RWPE1 (cell line): ENCODE measurements at regions of chr11 and their contacts with region 1.

Region 1: DNA sequence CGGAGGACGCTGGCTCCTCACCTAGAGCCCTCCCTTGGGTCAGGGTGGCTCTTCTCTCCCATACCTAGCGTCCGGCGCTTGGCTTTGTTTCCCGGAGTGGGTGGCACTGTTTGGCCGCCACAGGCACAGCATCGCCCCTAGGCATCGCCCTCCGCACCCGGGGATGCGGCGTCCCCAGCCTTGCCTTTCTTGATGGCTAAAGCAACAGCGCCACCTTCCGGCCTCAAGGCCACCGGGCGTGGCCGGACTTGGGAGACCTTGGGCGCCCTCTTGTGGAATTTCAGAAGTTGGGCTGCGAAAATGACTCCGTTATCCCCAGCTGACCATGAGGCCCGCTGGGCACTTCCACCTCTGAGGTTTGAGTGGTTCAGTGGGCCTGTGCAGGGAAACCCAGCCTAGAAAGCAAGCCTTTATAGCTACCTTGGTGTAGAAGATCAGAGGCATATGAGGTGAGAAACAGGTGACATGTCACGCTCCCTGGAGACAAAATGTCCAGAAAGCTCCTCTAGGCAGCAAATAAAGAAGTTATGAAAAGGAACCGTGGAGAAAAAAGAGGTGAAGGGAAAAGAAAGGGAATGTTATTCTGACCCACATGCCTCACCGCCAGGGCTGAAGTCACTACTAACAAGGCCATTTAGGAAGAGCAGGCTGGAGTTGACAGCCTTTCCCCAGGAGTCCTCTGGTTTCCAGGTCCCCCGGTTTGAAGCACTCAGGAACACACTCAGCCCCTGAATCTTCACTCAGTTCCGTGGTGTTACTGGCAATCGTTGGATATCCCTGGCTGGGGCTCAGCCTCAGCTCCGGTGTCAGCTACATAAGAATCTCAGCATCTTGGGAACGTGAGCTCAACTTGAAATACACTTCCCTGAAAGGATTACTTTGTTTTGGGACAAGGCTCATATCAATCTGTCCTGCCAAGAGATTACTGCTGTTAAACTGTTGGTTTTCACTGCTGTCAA is 54.1 kb downstream of the SNX19 start:
- DNase-seq: peak; percentile 76
- H3K27ac ChIP-seq: peak overlapping the region; percentile 1; the same call in 1 of the 2 replicates
- CTCF ChIP-seq: peak; percentile 96

Region 2: GRCh38 chr11:130434521-130435223 is 427.5 kb before region 1 on chr11:
- CTCF ChIA-PET with region 1: interaction called, 74 read pairs
- POLR2A ChIA-PET with region 1: no interaction called
- DNase-seq: peak; percentile 77
- H3K27ac ChIP-seq: peak overlapping the region; percentile 65
- CTCF ChIP-seq: peak; percentile 90

Region 3: GRCh38 chr11:130585545-130585944 is 276.6 kb before region 1 on chr11:
- CTCF ChIA-PET with region 1: no interaction called
- POLR2A ChIA-PET with region 1: no interaction called
- DNase-seq: peak; percentile 35
- H3K27ac ChIP-seq: peak overlapping the region; percentile 85
- CTCF ChIP-seq: no peak

Region 4: GRCh38 chr11:130827451-130828377 is 34.5 kb before region 1 on chr11:
- CTCF ChIA-PET with region 1: interaction called, 10 read pairs
- POLR2A ChIA-PET with region 1: no interaction called
- DNase-seq: peak; percentile 68
- H3K27ac ChIP-seq: peak overlapping the region; percentile 15; the same call in 1 of the 2 replicates
- CTCF ChIP-seq: peak; percentile 36

Region 5: DNA sequence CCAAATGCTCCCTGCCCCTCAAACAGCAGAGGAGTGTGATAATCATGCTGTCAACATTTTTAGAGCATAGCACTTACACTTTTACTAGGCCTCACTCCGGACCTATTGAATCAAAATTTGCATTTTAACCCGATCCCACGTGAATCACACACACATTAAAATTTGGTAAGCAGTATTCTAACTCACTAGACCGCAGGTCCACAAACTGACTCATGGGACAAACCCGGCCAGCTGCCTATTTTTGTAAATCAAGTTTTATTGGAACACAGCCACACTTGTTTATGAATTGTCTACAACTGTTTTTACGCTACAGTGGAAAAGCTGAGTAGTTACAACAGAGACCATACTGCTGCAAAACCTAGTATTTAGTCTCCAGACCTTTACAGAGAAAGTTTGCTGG is 10.8 kb after region 1 on chr11:
- CTCF ChIA-PET with region 1: interaction called, 21 read pairs
- POLR2A ChIA-PET with region 1: no interaction called
- DNase-seq: peak; percentile 36
- H3K27ac ChIP-seq: no peak overlapping the region
- CTCF ChIP-seq: no peak

Region 6: DNA sequence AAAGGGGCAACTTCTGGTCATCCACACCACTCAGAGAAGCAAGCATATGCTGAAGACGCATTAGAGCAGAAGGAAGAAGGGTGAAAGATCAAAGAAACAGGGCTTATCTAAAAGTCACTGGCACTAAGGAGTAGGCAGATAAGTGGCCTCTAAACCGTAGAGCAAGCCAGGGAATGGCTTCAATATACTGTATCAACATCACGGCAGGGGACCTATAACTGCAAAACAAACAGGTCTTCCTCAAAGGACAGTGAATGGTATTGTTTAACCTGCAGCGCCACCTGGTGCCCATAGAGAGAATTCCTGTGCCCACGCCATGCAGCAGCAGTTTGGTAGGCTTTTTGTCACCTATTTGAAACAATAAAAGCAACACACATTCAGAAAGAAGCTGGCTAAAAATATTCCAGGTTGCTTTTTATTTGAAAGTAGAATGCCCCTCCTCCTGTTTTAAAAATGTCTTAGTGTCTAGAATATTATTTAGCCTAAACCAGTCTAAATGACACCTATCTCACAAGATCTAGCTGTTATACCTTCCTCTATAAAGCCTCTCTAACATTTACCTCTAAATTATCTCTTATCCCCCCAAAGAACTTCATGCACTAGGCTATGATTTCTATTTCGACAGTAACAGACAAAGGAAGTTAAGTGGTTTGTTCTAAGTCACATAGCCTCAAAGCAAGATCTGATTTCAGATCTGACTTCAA is 32.3 kb after region 1 on chr11:
- CTCF ChIA-PET with region 1: interaction called, 12 read pairs
- POLR2A ChIA-PET with region 1: no interaction called
- DNase-seq: peak; percentile 35
- H3K27ac ChIP-seq: no peak overlapping the region
- CTCF ChIP-seq: peak; percentile 87

Region 7: DNA sequence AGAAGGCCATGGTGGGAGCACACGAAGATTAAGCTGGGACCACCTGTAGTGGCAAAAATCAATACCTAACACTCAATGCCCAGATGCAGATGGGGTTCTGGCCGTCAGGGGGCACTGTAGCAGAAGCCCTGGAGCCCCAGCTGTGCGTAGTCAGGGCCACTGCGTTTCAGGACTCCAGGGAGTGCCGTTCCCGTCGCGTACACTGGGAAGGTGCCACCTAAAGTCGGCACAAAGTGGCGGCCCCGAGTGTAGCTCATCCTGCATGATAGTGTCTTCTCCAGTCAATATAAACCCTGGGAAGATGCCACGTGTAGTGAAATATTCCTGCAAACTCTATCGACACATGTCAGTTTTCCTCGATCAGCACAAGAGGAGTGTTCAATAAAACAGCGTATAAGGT is 384.5 kb after region 1 on chr11:
- CTCF ChIA-PET with region 1: no interaction called
- POLR2A ChIA-PET with region 1: no interaction called
- DNase-seq: no peak
- H3K27ac ChIP-seq: no peak overlapping the region
- CTCF ChIP-seq: no peak